B cell (primary cell): ENCODE measurements at regions of chr17 and their contacts with region 1.

Region 1: DNA sequence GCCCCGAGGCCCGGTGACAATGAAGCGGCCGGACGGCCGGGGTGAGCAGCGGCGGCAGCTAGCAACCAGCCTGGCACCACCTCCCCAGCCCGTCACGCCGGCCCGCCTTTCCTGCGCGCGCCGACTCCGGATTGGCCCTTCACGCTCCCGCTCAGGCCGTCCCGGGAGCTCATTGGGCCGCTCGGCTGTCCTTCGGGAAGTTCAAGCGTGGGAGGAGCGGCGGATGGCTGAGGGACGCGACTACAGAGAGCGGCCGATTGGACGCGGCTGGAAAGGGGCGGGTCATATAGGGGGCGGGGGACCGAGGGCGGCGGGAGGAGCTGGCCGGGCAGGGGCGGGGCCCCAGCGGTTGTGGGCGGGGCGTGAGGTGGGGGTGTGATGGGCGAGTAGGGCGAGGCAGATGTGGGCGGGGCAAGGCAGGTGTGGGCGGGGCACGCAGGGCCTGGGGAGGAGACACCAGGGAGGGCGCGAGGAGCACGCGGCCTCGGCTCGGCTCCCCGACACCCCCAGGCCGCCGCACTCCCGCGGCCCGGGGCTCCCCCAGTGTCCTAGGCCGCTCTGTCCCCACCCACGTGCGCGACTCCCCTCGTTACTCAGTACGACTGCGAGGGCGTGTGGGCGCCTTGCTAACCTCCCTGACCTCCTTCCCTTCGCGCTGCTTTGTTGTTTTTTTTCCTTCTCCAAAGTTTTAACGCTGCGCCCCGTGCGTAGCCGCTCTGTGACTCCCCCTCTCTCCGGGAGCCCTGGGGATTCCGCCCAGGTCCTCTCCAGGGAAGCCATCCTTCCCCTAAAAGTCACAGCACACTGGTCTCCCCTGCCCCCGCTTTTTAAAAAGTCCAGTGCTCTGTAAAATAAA is at the start of gene CEP131:
- DNase-seq: peak; percentile 98
- ATAC-seq: peak; percentile 92
- H3K4me3 ChIP-seq: peak within 1 kb of the TSS; percentile 11 to 76 (median 64)
- H3K4me3 Mint-ChIP-seq: peak within 1 kb of the TSS; percentile 91
- H3K27ac ChIP-seq: peak within 1 kb of the TSS; percentile 38 to 88
- H3K27ac Mint-ChIP-seq: peak within 1 kb of the TSS; percentile 87
- H3K4me1 ChIP-seq: peaks cover 25 to 35% of the 10 kb centered on the region in 2 donors
- H3K4me1 Mint-ChIP-seq: peaks cover 33% of the 10 kb centered on the region
- H3K27me3 ChIP-seq: no peaks in the 10 kb centered on the region
- H3K27me3 Mint-ChIP-seq: no peaks in the 10 kb centered on the region
- CTCF ChIP-seq: no peak
- total RNA-seq, gene CEP131: 18.8 and 19.3 TPM in 2 replicates

Region 2: GRCh38 chr17:80147035-80147836 is 1075.9 kb before region 1 on chr17 and contains the start of gene EIF4A3:
- CTCF ChIA-PET with region 1: no interaction called
- POLR2A ChIA-PET with region 1: no interaction called
- intact Hi-C with region 1: loop called (anchors 2 kb)
- DNase-seq: peak; percentile 99
- ATAC-seq: peak; percentile 90
- H3K4me3 ChIP-seq: peak within 1 kb of the TSS; percentile 61 to 94 (median 79)
- H3K4me3 Mint-ChIP-seq: peak within 1 kb of the TSS; percentile 95
- H3K27ac ChIP-seq: peak within 1 kb of the TSS; percentile 82 to 87
- H3K27ac Mint-ChIP-seq: peak within 1 kb of the TSS; percentile 97
- H3K4me1 ChIP-seq: peaks cover 25 to 37% of the 10 kb centered on the region in 2 donors
- H3K4me1 Mint-ChIP-seq: peaks cover 36% of the 10 kb centered on the region
- H3K27me3 ChIP-seq: no peaks in the 10 kb centered on the region
- H3K27me3 Mint-ChIP-seq: no peaks in the 10 kb centered on the region
- CTCF ChIP-seq: no peak
- total RNA-seq, gene EIF4A3: 83.4 and 86.0 TPM in 2 replicates

Region 3: DNA sequence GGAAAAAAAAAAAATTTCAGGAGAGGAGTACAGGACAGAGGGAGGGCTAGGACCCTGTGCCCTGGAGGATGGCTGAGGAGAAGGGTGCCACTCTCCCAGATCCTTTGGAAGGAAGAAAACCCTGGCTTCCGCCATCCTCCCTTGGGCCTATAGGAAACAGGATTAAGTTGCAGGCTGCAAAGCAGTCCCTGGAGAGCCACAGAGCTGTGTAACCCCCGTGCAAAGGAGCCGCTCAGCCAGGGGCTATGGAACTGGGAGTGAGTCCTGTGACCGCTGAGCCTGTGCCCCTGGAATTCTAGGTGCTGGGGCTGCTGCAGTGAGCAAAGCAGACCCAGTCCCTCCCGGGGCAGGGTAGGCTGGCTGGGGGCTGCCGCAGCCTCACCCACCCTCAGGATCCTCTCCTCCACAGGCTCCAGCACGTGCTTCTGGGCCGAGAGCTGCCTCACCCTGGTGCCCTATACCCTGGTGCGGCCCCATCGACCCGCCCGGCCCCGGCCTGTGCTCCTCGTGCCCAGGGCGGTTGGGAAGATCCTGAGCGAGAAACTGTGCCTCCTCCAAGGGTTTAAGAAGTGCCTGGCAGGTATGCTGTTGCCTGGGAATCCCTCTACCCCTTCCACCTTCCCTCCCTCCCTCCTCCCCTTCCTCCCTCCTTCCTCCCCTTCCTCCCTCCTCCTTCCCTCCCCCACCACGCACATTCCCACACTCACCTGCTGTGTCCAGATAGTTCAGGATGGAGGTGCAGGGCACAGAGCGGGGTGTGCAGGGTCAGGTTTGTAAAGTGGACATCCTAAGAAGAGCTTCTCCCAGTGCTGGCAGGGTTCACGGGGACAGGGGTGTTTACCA is 1018.3 kb before region 1 on chr17:
- CTCF ChIA-PET with region 1: no interaction called
- POLR2A ChIA-PET with region 1: interaction called, 17 read pairs
- intact Hi-C with region 1: no loop called
- DNase-seq: no peak
- ATAC-seq: no peak
- H3K4me3 ChIP-seq: no peak overlapping the region
- H3K4me3 Mint-ChIP-seq: no peak overlapping the region
- H3K27ac ChIP-seq: no peak overlapping the region
- H3K27ac Mint-ChIP-seq: no peak overlapping the region
- H3K4me1 ChIP-seq: no peaks in the 10 kb centered on the region
- H3K4me1 Mint-ChIP-seq: no peaks in the 10 kb centered on the region
- H3K27me3 ChIP-seq: no peaks in the 10 kb centered on the region
- H3K27me3 Mint-ChIP-seq: no peaks in the 10 kb centered on the region
- CTCF ChIP-seq: no peak

Region 4: DNA sequence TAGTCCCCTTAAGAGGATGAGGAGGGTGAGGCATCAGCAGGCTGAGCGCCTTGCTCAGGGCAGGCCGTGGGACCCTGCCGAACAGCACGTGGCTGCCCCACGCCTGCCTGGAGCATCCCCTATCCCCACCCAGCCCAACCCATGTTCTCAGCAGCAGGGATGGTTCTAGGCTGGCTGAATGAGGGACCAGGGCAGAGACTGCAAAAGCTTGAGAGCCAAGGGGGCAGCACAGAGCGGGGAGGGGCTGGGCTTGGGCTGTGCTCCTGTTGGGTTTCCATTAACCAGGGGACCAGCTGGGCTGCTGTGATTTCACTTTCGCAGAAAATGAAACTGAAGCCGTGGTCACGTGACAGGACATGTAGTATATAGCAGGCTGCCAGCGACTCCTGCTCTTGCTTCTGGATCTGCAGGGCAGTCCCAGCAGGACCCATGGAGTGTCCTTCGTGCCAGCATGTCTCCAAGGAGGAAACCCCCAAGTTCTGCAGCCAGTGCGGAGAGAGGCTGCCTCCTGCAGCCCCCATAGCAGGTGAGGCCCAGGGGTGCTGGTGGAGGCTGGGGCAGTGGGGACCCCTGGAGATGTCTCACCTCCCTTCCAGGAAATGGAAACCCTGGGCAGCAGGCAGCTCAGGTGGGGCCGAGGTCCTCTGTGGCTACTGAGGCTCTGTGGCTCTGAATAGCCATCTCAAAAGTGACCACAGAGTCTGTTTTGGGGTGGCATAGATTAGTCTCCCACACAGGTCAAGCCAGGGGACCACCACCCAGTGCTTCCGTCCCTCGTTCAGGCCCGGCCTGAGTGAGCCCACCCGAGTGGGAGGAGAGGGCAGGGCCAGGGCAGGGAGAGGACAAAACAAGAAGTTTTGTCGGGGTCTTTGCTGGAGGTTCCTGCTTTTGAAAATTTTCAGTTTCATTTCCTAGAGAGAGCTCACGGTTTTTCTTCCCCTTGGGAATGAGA is 959.6 kb before region 1 on chr17:
- CTCF ChIA-PET with region 1: no interaction called
- POLR2A ChIA-PET with region 1: no interaction called
- intact Hi-C with region 1: loop called (anchors 5 kb)
- DNase-seq: peak; percentile 92
- ATAC-seq: peak; percentile 62
- H3K4me3 ChIP-seq: peak overlapping the region; percentile 46 to 99 (median 86)
- H3K4me3 Mint-ChIP-seq: peak overlapping the region; percentile 97
- H3K27ac ChIP-seq: peak overlapping the region; percentile 86 to 90
- H3K27ac Mint-ChIP-seq: peak overlapping the region; percentile 95
- H3K4me1 ChIP-seq: peaks cover 35 to 57% of the 10 kb centered on the region in 2 donors
- H3K4me1 Mint-ChIP-seq: peaks cover 57% of the 10 kb centered on the region
- H3K27me3 ChIP-seq: no peaks in the 10 kb centered on the region
- H3K27me3 Mint-ChIP-seq: no peaks in the 10 kb centered on the region
- CTCF ChIP-seq: peak; percentile 37

Region 5: DNA sequence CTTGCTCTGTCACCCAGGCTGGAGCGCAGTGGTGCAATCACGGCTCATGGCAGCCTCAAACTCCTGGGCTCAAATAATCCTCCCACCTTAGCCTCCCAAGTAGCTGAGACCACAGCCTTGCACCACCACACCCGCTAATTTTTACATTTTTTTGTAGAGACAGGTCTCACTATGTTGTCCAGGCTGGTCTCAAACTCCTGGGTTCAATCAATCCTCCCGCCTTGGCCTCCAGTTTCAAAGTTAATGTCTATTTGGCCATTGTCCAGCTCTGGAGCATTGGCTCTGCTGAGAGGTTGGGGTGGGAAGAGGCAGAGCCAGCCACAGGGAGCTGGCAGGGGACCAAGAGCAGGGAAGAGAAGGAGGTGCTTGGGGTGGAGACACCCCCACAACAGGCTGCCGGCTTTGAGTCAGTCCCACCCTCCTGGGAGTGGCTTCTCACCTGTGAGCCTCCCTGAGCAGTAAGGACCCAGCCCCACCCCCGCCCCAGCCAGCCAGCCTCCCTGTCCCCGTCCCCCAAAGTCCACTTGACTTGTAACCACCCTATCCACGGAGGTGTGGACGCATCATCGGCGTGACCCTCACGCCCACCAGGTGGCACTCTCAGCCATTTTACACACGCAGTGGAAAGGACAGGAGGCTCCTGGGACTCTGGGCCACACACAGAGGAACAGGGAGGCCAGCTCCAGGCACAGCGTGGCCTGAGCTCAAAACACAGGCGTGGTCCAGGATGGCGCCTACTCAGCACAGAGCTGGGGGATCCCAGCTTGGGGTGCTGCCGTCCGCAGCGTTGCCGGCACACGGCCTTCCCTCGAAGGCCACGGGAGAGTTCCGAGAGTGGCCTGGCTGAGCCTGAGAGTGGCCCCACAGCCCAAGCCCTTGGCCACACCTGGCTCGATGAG is 80.6 kb before region 1 on chr17:
- CTCF ChIA-PET with region 1: interaction called, 4 read pairs
- POLR2A ChIA-PET with region 1: no interaction called
- intact Hi-C with region 1: loop called (anchors 5 kb)
- DNase-seq: peak; percentile 79
- ATAC-seq: peak; percentile 73
- H3K4me3 ChIP-seq: no peak overlapping the region
- H3K4me3 Mint-ChIP-seq: no peak overlapping the region
- H3K27ac ChIP-seq: no peak overlapping the region
- H3K27ac Mint-ChIP-seq: no peak overlapping the region
- H3K4me1 ChIP-seq: no peaks in the 10 kb centered on the region
- H3K4me1 Mint-ChIP-seq: peaks cover 2% of the 10 kb centered on the region
- H3K27me3 ChIP-seq: peaks cover 0 to 4% (median 0%) of the 10 kb centered on the region in 4 experiments
- H3K27me3 Mint-ChIP-seq: peaks cover 3% of the 10 kb centered on the region
- CTCF ChIP-seq: peak; percentile 73

Region 6: GRCh38 chr17:81238817-81239600 is 15.9 kb after region 1 on chr17 and contains the starts of genes NDUFAF8 and TEPSIN:
- CTCF ChIA-PET with region 1: interaction called, 12 read pairs
- POLR2A ChIA-PET with region 1: interaction called, 19 read pairs
- intact Hi-C with region 1: loop called (anchors 1 kb)
- DNase-seq: peak; percentile 98
- ATAC-seq: peak; percentile 95
- H3K4me3 ChIP-seq: peak within 1 kb of the TSS; percentile 49 to 90 (median 82)
- H3K4me3 Mint-ChIP-seq: peak within 1 kb of the TSS; percentile 93
- H3K27ac ChIP-seq: peak within 1 kb of the TSS; percentile 18 to 82
- H3K27ac Mint-ChIP-seq: peak within 1 kb of the TSS; percentile 91
- H3K4me1 ChIP-seq: peaks cover 19 to 29% of the 10 kb centered on the region in 2 donors
- H3K4me1 Mint-ChIP-seq: peaks cover 44% of the 10 kb centered on the region
- H3K27me3 ChIP-seq: no peaks in the 10 kb centered on the region
- H3K27me3 Mint-ChIP-seq: no peaks in the 10 kb centered on the region
- CTCF ChIP-seq: no peak
- total RNA-seq, gene NDUFAF8: 39.4 and 42.6 TPM in 2 replicates
- total RNA-seq, gene TEPSIN: 177 and 180 TPM in 2 replicates

Region 7: DNA sequence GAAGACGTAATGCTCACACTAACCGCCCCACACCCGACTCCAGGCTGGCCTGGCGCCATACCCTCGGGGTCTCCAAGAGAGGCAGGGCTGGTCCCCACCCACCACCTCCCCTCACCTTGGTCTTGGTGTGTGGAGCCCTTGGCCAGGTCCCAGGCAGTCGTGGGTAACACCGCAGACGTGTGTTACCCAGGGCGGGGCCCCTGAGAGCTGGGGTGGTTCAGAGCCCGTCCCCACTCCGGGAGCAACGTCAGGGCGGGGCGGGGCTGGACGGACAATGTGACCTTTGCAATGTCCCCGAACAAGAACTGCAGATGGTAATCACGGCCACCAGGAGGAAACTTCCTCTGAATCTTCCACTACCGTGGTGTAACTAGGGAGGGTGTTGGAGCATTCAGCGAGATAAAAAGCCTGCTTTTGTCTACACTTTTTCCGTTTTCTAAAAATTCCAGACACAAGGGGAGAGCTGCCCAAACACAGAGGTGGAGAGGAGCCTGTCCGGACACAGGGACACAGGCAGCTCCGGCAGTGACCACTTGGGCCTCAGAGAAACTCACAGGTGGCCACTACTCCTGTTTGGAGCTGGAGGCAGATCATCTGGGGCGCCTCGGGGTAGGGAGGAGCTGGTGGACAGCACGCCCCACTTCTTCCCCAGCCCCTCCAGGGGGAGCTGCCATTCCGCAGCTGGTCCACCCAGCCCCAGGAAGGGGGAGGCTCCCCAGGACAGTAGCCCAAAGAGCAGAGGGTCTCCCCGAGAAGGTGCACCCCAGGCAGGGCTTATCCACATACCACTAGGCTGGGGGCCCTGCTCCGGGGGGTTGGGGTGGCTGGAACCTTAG is 86.2 kb after region 1 on chr17:
- CTCF ChIA-PET with region 1: no interaction called
- POLR2A ChIA-PET with region 1: no interaction called
- intact Hi-C with region 1: no loop called
- DNase-seq: peak; percentile 51
- ATAC-seq: peak; percentile 51
- H3K4me3 ChIP-seq: no peak overlapping the region
- H3K4me3 Mint-ChIP-seq: no peak overlapping the region
- H3K27ac ChIP-seq: no peak overlapping the region
- H3K27ac Mint-ChIP-seq: no peak overlapping the region
- H3K4me1 ChIP-seq: peaks cover 6 to 8% of the 10 kb centered on the region in 2 donors
- H3K4me1 Mint-ChIP-seq: peaks cover 7% of the 10 kb centered on the region
- H3K27me3 ChIP-seq: peaks cover 0 to 11% (median 4%) of the 10 kb centered on the region in 4 experiments
- H3K27me3 Mint-ChIP-seq: peaks cover 11% of the 10 kb centered on the region
- CTCF ChIP-seq: peak; percentile 11

Region 8: DNA sequence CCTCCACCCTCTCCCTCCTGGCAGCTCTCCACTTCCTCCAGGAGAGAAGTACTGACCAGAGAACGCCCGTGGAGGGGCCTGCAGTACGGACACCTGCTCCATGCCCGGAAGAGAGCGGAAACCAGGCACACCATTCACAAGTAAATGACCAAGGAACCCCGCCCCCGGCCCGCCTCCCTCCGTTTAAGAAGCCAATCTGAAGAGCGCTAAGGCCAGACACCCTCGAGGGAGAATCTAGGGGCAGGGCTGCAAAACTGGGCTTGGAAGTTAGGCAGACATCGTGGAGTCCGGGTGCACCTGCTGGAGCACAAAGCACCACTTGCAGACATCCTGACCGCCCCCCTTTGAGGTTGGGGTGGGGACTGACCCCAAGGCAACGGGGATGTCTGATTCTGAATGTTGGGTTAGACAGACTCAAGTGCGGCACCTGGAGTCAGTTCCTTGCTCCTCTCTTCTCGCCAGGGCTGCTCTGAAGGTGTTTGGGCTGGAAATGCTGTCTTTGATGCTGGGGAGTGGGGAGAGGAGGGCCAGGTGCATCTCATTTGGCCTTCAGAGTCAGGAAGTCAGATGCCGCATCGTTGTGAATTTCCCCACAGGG is 330.0 kb after region 1 on chr17:
- CTCF ChIA-PET with region 1: no interaction called
- POLR2A ChIA-PET with region 1: interaction called, 4 read pairs
- intact Hi-C with region 1: loop called (anchors 1 kb)
- DNase-seq: peak; percentile 92
- ATAC-seq: peak; percentile 64
- H3K4me3 ChIP-seq: peak overlapping the region; percentile 63 to 97 (median 91)
- H3K4me3 Mint-ChIP-seq: peak overlapping the region; percentile 92
- H3K27ac ChIP-seq: peak overlapping the region; percentile 66 to 86
- H3K27ac Mint-ChIP-seq: peak overlapping the region; percentile 93
- H3K4me1 ChIP-seq: peaks cover 18 to 23% of the 10 kb centered on the region in 2 donors
- H3K4me1 Mint-ChIP-seq: peaks cover 31% of the 10 kb centered on the region
- H3K27me3 ChIP-seq: no peaks in the 10 kb centered on the region
- H3K27me3 Mint-ChIP-seq: no peaks in the 10 kb centered on the region
- CTCF ChIP-seq: no peak